ENCODE measurements at regions of chr10 and their contacts with region 1.

Region 1: GRCh38 chr10:14500172-14500765 is 169.5 kb upstream of the FRMD4A start:
- DNase-seq: peak; percentile 57
- H3K4me3 ChIP-seq: no peak overlapping the region
- H3K27ac ChIP-seq: no peak overlapping the region
- H3K4me1 ChIP-seq: peaks cover 4% of the 10 kb centered on the region
- H3K27me3 ChIP-seq: no peaks in the 10 kb centered on the region
- CTCF ChIP-seq: no peak

Region 2: DNA sequence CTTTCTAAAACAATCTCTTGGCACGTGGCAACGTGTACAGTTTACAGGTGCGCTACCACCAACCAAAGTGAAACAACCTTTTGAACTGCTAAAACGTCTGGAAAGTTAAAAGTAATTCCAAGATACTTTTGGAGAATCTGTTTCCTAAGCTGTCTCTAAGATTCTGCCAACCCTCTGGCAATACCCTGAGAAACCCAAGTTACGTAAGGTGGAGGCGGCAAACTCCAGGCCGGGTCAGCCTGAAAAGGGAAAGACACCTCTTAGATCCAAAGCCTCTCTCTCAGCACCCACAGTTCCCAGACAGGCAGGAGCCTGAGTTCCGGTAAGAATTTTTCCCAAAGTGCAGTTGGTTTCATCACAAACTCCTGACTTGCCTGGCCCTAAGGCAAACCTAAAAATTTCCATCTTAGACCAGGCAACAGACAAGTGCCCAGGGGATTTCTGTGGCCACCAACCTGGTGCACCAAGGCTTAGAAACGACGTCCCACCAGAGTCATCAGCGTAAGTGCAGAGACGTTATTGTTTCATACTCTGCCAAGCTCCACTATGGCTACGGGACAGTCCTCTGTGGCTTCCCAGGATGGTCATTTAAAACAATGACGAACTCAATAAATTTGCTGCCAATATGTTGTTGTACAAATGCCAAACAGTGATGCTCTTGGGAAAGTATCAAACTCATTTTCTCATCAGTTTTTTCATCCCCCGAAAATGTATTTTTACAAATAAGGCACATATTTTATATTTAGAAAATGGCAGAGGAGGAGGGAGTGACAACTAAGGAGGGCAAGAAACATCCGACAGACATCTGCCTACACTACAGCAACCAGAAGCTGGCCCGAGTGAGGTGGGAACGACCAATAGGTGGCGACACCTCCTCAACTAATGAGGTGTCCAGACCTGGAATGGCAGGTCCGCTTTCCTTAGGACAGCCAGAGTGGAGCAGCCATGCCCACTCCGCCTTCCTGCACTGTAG is 36.3 kb after region 1 on chr10:
- intact Hi-C with region 1: loop called (anchors 5 kb)
- DNase-seq: peak; percentile 86
- H3K4me3 ChIP-seq: no peak overlapping the region
- H3K27ac ChIP-seq: no peak overlapping the region
- H3K4me1 ChIP-seq: peaks cover 7% of the 10 kb centered on the region
- H3K27me3 ChIP-seq: no peaks in the 10 kb centered on the region
- CTCF ChIP-seq: peak; percentile 59

Region 3: DNA sequence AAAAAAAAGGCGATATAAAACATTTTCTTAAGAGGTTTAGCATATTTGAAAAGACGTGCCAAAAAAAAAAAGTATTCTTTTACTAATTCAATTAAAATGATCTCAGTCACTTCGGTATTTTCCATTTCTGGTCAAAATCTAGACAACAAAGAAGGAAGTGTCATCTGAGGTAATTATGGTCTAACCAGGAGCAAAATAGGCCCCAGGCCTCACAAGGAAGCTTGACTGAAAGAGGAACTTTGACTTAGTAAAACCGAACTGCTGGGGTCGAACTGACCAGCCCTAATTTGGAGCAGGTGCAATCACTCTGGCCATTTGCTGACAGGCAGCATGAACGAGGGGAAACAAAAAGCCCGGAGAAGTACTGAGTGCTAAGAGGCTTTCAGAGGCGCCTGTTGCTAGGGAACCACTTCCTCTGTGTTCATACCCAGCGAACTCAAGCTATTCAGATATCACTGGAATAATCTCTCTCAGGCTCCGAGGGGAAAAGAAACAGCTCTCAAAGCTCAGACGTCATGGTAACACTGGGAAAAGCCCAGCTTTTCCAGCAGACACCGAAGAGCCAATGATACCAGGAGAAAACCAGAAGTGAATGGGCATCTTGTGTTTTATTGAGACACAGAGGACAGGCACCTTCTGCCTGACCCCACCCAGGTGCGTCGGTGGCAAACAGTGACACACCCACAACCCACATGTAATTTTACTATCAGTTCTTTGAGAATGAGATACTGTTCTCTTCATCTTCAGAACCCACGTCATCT is 147.9 kb after region 1 on chr10:
- intact Hi-C with region 1: no loop called
- DNase-seq: peak; percentile 71
- H3K4me3 ChIP-seq: no peak overlapping the region
- H3K27ac ChIP-seq: peak overlapping the region; percentile 56
- H3K4me1 ChIP-seq: peaks cover 4% of the 10 kb centered on the region
- H3K27me3 ChIP-seq: no peaks in the 10 kb centered on the region
- CTCF ChIP-seq: no peak

Region 4: DNA sequence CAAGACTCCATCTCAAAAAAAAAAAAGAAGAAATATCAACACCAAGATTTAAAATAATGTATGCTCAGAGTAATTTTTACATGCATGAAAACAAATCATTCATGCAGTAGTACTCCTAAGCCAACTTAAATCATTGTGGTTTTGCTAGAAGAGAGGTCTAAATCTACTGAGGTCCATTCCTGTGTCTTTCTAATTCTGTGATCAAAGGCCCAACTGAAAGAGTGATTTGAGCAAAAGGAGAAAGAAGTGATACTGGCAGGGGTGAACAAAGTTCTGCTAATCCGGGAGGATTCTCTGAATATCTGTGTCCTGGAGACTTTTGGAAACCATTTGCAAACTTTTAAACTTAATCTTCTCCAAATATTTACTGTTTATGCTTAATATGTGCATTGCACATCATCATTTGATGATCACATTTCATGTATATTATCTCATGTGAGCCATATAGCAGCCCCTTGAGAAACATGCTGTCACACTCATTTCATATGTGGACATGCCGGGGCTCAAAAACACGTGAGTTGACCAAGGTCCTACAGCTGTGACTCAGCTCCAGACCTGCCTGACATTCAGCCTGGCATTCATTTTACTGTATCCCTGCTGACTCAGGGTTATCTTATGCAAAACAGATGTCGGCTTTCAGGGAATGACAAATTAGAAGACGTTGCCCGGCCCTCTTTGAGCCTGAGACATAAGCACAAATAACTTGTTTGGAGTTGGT is 198.0 kb after region 1 on chr10:
- intact Hi-C with region 1: no loop called
- DNase-seq: no peak
- H3K4me3 ChIP-seq: no peak overlapping the region
- H3K27ac ChIP-seq: no peak overlapping the region
- H3K4me1 ChIP-seq: no peaks in the 10 kb centered on the region
- H3K27me3 ChIP-seq: no peaks in the 10 kb centered on the region
- CTCF ChIP-seq: no peak

Region 5: GRCh38 chr10:14779053-14779651 is 278.9 kb after region 1 on chr10:
- intact Hi-C with region 1: no loop called
- DNase-seq: peak; percentile 50
- H3K4me3 ChIP-seq: no peak overlapping the region
- H3K27ac ChIP-seq: peak overlapping the region; percentile 1
- H3K4me1 ChIP-seq: peaks cover 6% of the 10 kb centered on the region
- H3K27me3 ChIP-seq: no peaks in the 10 kb centered on the region
- CTCF ChIP-seq: no peak

Region 6: DNA sequence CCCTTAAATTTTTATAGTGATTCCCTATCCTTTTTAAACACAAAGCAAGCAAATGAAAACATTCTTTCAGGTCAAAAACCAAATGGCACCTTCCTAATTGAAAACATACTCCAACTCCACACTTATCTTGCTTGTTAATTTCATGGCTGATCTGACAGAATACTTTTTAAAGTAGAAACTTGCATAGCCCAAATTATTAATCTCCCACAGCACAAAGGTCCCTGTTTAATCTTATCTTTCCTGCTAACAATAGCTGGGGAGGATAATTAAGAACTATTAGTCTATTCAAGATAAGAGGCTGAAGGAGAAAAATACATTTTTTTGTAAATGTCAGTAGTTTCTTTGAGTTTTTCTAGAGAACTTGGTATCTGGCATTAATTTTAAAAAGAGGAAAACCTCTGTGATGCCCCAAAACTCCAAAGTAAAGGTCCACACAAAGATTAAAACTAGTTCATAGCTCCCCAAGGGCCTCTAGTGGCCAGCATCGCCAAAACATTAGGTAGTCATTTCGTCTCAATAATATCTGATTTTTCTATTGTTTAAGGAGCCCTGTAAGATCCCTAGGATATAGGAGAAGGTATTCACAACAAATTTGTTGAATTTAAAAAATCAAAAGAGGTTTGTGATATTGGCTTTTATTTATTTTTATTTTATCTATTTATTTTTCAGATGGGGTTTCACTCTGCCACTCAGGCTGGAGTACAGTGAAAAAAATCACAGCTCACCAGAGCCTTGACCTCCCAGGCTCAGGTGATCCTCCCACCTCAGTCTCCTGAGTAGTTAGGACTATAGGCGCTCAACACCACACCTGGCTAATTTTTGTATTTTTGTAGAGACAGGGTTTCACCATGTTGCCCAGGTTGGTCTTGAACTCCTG is 322.8 kb after region 1 on chr10:
- intact Hi-C with region 1: loop called (anchors 5 kb)
- DNase-seq: peak; percentile 34
- H3K4me3 ChIP-seq: no peak overlapping the region
- H3K27ac ChIP-seq: no peak overlapping the region
- H3K4me1 ChIP-seq: no peaks in the 10 kb centered on the region
- H3K27me3 ChIP-seq: no peaks in the 10 kb centered on the region
- CTCF ChIP-seq: peak; percentile 49

Measured in colonic mucosa (tissue), 4 donors.